IMR-90 (cell line): ENCODE measurements at regions of chr10 and their contacts with region 1.

Region 1: GRCh38 chr10:132458593-132459300 is 61.7 kb downstream of the PWWP2B start:
- DNase-seq: no peak
- ATAC-seq: peak; percentile 95
- H3K4me3 ChIP-seq: no peak overlapping the region
- H3K27ac ChIP-seq: no peak overlapping the region
- H3K4me1 ChIP-seq: no peaks in the 10 kb centered on the region
- H3K27me3 ChIP-seq: peaks cover 9% of the 10 kb centered on the region; the same call in 1 of the 2 replicates
- CTCF ChIP-seq: peak; percentile 91
- POLR2A ChIP-seq: no peak
- RAD21 ChIP-seq: peak; percentile 97

Region 2: GRCh38 chr10:132575356-132576201 is 116.8 kb after region 1 on chr10:
- CTCF ChIA-PET with region 1: no interaction called
- POLR2A ChIA-PET with region 1: no interaction called
- dilution Hi-C with region 1: no loop called
- in situ Hi-C with region 1: no loop called
- intact Hi-C with region 1: loop called (anchors 1 kb)
- DNase-seq: peak; percentile 91
- ATAC-seq: peak; percentile 89
- H3K4me3 ChIP-seq: no peak overlapping the region
- H3K27ac ChIP-seq: no peak overlapping the region
- H3K4me1 ChIP-seq: peaks cover 24% of the 10 kb centered on the region
- H3K27me3 ChIP-seq: peaks cover 2% of the 10 kb centered on the region; the same call in 1 of the 2 replicates
- CTCF ChIP-seq: no peak
- POLR2A ChIP-seq: no peak
- RAD21 ChIP-seq: no peak